ENCODE measurements at regions of chr1 and their contacts with region 1.

Region 1: DNA sequence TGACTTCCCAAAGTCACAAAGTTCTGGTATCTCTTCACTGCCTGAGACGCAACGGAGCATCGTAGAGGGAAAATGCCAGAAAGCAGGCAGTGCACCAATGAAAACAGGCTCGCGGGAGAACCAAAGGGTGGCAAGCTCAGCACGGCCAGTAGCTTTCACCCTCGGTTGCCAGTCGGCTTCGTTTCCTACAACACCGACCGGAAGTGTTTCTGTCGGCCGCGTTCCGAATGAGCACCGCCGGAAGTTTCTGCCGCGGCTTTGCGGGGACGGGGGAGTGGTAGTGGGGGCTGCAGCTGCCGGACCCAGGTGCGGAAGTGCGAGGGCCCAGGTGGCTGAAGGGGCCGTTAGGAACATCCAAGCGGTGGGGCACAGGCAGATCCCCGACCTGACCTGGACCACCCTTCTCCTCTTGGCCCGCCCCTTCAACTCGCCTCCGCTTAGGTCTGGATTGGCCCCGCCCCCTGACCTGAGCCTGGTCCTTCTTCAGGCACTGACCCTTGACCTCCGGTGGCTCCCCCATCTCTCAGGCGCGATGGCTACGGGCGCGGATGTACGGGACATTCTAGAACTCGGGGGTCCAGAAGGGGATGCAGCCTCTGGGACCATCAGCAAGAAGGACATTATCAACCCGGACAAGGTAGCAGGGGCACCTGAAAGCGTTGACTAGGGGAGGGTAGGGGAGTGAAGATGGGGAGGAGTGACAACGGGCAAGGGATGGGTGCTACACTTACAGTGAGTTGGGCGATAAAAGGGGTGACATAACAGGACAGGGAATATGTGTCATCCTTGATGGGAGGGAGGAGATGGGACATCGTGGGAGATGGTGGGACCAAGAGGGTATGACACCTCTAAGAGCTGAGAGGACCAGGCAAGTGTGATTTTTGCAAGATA is at the start of gene DMAP1:
- DNase-seq: peak; percentile 85 to 94 (median 93)
- H3K4me3 ChIP-seq: peak within 1 kb of the TSS; percentile 79 to 95 (median 85)
- H3K27ac ChIP-seq: peak within 1 kb of the TSS in 1 of 2 experiments; percentile 79
- H3K4me1 ChIP-seq: peaks cover 12 to 24% (median 20%) of the 10 kb centered on the region in 4 experiments
- H3K27me3 ChIP-seq: no peaks in the 10 kb centered on the region

Region 2: GRCh38 chr1:44237721-44238457 is 24.4 kb after region 1 on chr1:
- CTCF ChIA-PET with region 1: interaction called, 140 read pairs
- POLR2A ChIA-PET with region 1: no interaction called
- DNase-seq: peak; percentile 82 to 92 (median 91)
- H3K4me3 ChIP-seq: peak overlapping the region in 3 of 7 experiments; percentile 35 to 60 (median 48)
- H3K27ac ChIP-seq: no peak overlapping the region
- H3K4me1 ChIP-seq: peaks cover 0 to 28% (median 25%) of the 10 kb centered on the region in 4 experiments
- H3K27me3 ChIP-seq: no peaks in the 10 kb centered on the region

Region 3: GRCh38 chr1:44318097-44319088 is 104.9 kb after region 1 on chr1:
- CTCF ChIA-PET with region 1: interaction called, 26 read pairs
- POLR2A ChIA-PET with region 1: no interaction called
- DNase-seq: peak; percentile 39 to 66 (median 56)
- H3K4me3 ChIP-seq: no peak overlapping the region
- H3K27ac ChIP-seq: no peak overlapping the region
- H3K4me1 ChIP-seq: peaks cover 0 to 10% (median 4%) of the 10 kb centered on the region in 4 experiments
- H3K27me3 ChIP-seq: no peaks in the 10 kb centered on the region

Region 4: DNA sequence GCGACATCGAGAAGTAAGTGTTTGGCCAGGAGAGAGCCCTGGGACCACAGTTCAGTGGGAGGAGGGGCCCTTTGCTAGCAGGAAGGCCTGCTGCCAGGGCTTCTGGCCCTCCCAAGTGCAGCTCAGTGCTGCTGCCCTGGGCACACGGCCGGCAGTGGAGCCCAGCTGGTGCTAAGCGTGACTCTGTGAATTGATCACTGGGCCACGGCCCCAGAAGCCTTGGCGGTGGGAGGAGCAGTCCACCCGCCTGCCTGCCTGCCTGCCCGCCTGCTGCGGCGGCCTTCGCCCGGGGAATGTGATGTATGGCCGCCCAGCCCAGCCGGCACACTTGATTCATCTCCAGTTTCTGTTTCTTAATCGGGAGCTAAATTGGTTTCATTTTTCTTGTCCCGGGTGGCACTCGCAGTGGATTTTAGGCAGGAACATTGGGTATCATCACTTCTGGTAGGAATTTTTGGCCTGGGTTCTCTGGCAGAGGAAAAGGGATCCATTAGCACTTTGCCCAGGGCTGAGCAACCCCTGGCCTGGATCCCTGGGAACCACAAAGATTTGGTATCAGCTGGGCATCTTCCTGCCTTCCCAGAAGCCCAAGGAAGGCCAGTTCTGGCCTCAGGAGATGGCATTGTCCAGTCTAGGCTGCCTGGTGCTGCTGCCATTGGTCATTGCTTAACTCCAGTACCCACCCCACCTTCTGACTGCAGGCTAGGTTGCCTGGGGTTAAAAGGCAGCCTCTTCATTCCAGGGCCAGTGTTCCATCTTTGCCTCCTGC is 432.2 kb after region 1 on chr1:
- CTCF ChIA-PET with region 1: interaction called, 10 read pairs
- POLR2A ChIA-PET with region 1: no interaction called
- DNase-seq: no peak
- H3K4me3 ChIP-seq: no peak overlapping the region
- H3K27ac ChIP-seq: no peak overlapping the region
- H3K4me1 ChIP-seq: no peaks in the 10 kb centered on the region
- H3K27me3 ChIP-seq: no peaks in the 10 kb centered on the region